ENCODE measurements at regions of chr17 and their contacts with region 1.

Region 1: DNA sequence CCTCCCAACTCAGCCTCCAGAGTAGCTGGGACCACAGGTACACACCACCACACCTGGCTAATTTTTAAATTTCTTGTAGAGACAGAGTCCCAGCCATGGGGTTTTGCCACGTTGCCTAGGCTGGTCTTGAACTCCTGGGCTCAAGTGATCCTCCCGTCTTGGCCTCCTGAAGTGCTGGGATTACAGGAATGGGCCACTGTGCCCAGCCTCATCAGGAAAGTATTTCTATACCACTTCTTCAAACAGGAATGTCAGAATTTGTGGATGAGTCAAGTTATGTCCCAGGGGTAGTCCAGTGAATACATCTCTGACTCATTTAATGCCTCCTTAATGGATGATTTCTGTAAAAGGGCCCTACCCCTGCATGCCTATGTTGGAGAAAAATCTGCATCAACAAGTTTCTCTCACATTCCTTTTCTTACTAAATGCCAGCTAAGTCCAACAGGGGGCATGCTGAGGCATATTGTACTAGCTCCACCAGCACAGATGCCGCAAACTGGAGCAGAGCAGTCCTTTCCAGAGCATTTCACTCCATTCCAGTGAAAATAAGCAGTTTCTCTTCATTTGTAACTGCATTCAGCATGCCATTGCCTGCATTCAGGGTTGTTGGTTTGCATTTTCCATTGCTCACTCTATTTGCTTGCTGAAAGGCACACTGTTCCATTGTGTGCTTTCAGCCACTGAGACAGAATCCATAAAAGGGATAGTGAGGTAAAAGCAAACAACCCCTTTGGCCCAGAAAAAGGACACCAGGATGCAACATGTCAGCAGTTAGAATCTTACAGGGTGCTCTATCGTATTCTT is 5.3 kb upstream of the CAVIN1 start:
- DNase-seq: peak; percentile 75 to 82
- H3K4me3 ChIP-seq: no peak overlapping the region
- H3K4me3 Mint-ChIP-seq: no peak overlapping the region
- H3K27ac Mint-ChIP-seq: peak overlapping the region; percentile 72
- H3K4me1 ChIP-seq: peaks cover 38% of the 10 kb centered on the region
- H3K4me1 Mint-ChIP-seq: peaks cover 34% of the 10 kb centered on the region
- H3K27me3 ChIP-seq: no peaks in the 10 kb centered on the region
- H3K27me3 Mint-ChIP-seq: no peaks in the 10 kb centered on the region
- CTCF ChIP-seq: peak; percentile 78

Region 2: DNA sequence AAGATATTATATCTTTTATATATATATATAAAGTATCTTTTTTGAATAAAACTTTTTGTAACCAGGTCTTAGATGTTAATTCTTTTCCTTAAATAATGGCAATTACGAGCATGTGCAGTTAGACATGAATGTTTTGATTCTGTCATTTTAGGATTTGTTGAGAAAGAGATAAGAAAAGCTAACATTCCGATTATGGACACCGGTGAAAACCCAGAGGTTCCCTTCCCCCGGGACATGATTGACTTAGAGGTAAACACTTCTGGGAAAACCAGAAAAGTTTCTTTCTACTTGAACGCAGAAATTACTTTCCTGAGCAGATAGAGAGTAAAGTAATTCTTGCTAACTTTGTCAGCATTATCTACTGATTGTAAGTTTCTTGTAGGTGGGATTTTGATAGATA is 39.5 kb after region 1 on chr17:
- CTCF ChIA-PET with region 1: interaction called, 3 read pairs
- POLR2A ChIA-PET with region 1: interaction called, 11 read pairs
- intact Hi-C with region 1: loop called (anchors 5 kb)
- DNase-seq: peak; percentile 61 to 75
- H3K4me3 ChIP-seq: no peak overlapping the region
- H3K4me3 Mint-ChIP-seq: peak overlapping the region; percentile 36
- H3K27ac Mint-ChIP-seq: peak overlapping the region; percentile 43
- H3K4me1 ChIP-seq: peaks cover 46% of the 10 kb centered on the region
- H3K4me1 Mint-ChIP-seq: peaks cover 29% of the 10 kb centered on the region
- H3K27me3 ChIP-seq: no peaks in the 10 kb centered on the region
- H3K27me3 Mint-ChIP-seq: no peaks in the 10 kb centered on the region
- CTCF ChIP-seq: no peak

Region 3: DNA sequence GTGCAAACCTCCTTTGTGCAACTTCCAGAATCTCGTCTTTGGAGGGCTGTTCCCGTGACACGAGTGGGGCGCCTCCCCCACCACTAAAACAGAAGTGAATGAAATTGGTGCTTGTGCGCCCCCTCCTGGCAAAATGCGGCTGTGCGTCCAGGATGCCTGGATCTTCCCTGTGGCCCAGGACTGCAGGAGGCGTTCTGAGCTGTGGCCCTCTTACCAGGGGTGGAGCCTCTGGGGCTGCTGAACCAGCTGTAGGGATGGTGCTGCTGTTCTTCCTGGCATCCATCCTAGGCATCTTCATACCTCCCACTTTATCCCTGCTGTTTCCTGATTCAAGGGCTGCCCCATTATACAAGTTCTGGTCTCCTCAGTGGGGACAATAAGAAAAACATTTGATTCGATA is 89.2 kb after region 1 on chr17:
- CTCF ChIA-PET with region 1: interaction called, 13 read pairs
- POLR2A ChIA-PET with region 1: interaction called, 9 read pairs
- intact Hi-C with region 1: loop called (anchors 1 kb)
- DNase-seq: peak; percentile 82 to 89
- H3K4me3 ChIP-seq: no peak overlapping the region
- H3K4me3 Mint-ChIP-seq: no peak overlapping the region
- H3K27ac Mint-ChIP-seq: peak overlapping the region; percentile 90
- H3K4me1 ChIP-seq: peaks cover 51% of the 10 kb centered on the region
- H3K4me1 Mint-ChIP-seq: peaks cover 46% of the 10 kb centered on the region
- H3K27me3 ChIP-seq: no peaks in the 10 kb centered on the region
- H3K27me3 Mint-ChIP-seq: no peaks in the 10 kb centered on the region
- CTCF ChIP-seq: peak; percentile 90 to 97

Region 4: DNA sequence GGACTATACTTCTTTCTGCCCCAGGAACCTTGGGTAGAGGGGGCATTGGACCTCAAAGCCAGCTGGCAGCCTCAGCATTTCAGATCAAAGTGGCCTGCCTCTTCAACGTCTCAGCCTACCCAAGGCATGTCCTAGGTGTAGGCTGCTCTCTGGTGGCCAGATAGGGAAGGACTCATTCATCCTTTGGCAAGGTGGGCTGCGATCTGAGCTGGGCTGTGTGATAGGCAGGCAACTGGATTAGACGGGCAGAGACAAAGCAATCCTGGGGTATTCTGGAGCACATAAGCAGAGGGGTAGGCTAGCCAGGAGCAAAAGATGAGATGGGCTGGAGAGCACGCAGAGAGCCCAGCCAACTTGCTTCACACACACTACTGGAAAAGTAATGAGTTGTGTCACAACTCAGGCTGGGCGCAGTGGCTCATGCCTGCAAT is 98.9 kb after region 1 on chr17:
- CTCF ChIA-PET with region 1: interaction called, 22 read pairs
- POLR2A ChIA-PET with region 1: interaction called, 4 read pairs
- intact Hi-C with region 1: no loop called
- DNase-seq: peak; percentile 81 to 82
- H3K4me3 ChIP-seq: no peak overlapping the region
- H3K4me3 Mint-ChIP-seq: no peak overlapping the region
- H3K27ac Mint-ChIP-seq: peak overlapping the region; percentile 55
- H3K4me1 ChIP-seq: peaks cover 46% of the 10 kb centered on the region
- H3K4me1 Mint-ChIP-seq: peaks cover 44% of the 10 kb centered on the region
- H3K27me3 ChIP-seq: no peaks in the 10 kb centered on the region
- H3K27me3 Mint-ChIP-seq: no peaks in the 10 kb centered on the region
- CTCF ChIP-seq: peak; percentile 82 to 90